ENCODE measurements at regions of chr1 and their contacts with region 1.

Region 1: GRCh38 chr1:24688621-24689195 is 45.6 kb downstream of the SRRM1 start:
- DNase-seq: no peak
- ATAC-seq: peak; percentile 99
- H3K4me3 ChIP-seq: no peak overlapping the region
- H3K27ac ChIP-seq: no peak overlapping the region
- H3K4me1 ChIP-seq: peaks cover 5% of the 10 kb centered on the region
- H3K27me3 ChIP-seq: no peaks in the 10 kb centered on the region
- CTCF ChIP-seq: peak; percentile 91 to 96 (median 96)
- EP300 ChIP-seq: no peak
- POLR2A ChIP-seq: no peak
- RAD21 ChIP-seq: peak; percentile 99

Region 2: GRCh38 chr1:24699628-24700027 is 10.9 kb after region 1 on chr1:
- CTCF ChIA-PET with region 1: interaction called, 4 read pairs
- POLR2A ChIA-PET with region 1: interaction called, 3 read pairs
- RAD21 ChIA-PET with region 1: interaction called, 10 read pairs
- SMC1A ChIA-PET with region 1: interaction called, 26 read pairs
- in situ Hi-C with region 1: no loop called
- intact Hi-C with region 1: no loop called
- DNase-seq: no peak
- ATAC-seq: no peak
- H3K4me3 ChIP-seq: no peak overlapping the region
- H3K27ac ChIP-seq: no peak overlapping the region
- H3K4me1 ChIP-seq: peaks cover 17% of the 10 kb centered on the region
- H3K27me3 ChIP-seq: no peaks in the 10 kb centered on the region
- CTCF ChIP-seq: no peak
- EP300 ChIP-seq: no peak
- POLR2A ChIP-seq: no peak
- RAD21 ChIP-seq: no peak

Region 3: GRCh38 chr1:24744911-24745710 is 56.4 kb after region 1 on chr1 and contains the start of gene CLIC4:
- CTCF ChIA-PET with region 1: interaction called, 122 read pairs
- POLR2A ChIA-PET with region 1: interaction called, 29 read pairs
- RAD21 ChIA-PET with region 1: interaction called, 109 read pairs
- SMC1A ChIA-PET with region 1: interaction called, 93 read pairs
- in situ Hi-C with region 1: no loop called
- intact Hi-C with region 1: loop called (anchors 2 kb)
- DNase-seq: peak; percentile 94
- ATAC-seq: peak; percentile 78
- H3K4me3 ChIP-seq: peak within 1 kb of the TSS; percentile 77
- H3K27ac ChIP-seq: peak within 1 kb of the TSS; percentile 76
- H3K4me1 ChIP-seq: peaks cover 34% of the 10 kb centered on the region
- H3K27me3 ChIP-seq: no peaks in the 10 kb centered on the region
- CTCF ChIP-seq: peak in 2 of 3 experiments; percentile 18 to 72; a peak in 3 of 6 replicates
- EP300 ChIP-seq: peak; percentile 34 to 64; a peak in 2 of 4 replicates
- POLR2A ChIP-seq: peak; percentile 91
- RAD21 ChIP-seq: no peak; the same call in 1 of the 2 replicates
- polyA plus RNA-seq, gene CLIC4: 20.4 to 26.5 TPM

Region 4: GRCh38 chr1:24769656-24770651 is 81.2 kb after region 1 on chr1:
- CTCF ChIA-PET with region 1: interaction called, 20 read pairs
- POLR2A ChIA-PET with region 1: interaction called, 5 read pairs
- RAD21 ChIA-PET with region 1: interaction called, 7 read pairs
- SMC1A ChIA-PET with region 1: interaction called, 40 read pairs
- in situ Hi-C with region 1: no loop called
- intact Hi-C with region 1: no loop called
- DNase-seq: no peak
- ATAC-seq: peak; percentile 78
- H3K4me3 ChIP-seq: no peak overlapping the region
- H3K27ac ChIP-seq: peak overlapping the region; percentile 54
- H3K4me1 ChIP-seq: peaks cover 7% of the 10 kb centered on the region; the same call in 1 of the 2 replicates
- H3K27me3 ChIP-seq: no peaks in the 10 kb centered on the region
- CTCF ChIP-seq: no peak
- EP300 ChIP-seq: peak; percentile 49 to 57; a peak in 3 of 4 replicates
- POLR2A ChIP-seq: no peak
- RAD21 ChIP-seq: no peak

Region 5: DNA sequence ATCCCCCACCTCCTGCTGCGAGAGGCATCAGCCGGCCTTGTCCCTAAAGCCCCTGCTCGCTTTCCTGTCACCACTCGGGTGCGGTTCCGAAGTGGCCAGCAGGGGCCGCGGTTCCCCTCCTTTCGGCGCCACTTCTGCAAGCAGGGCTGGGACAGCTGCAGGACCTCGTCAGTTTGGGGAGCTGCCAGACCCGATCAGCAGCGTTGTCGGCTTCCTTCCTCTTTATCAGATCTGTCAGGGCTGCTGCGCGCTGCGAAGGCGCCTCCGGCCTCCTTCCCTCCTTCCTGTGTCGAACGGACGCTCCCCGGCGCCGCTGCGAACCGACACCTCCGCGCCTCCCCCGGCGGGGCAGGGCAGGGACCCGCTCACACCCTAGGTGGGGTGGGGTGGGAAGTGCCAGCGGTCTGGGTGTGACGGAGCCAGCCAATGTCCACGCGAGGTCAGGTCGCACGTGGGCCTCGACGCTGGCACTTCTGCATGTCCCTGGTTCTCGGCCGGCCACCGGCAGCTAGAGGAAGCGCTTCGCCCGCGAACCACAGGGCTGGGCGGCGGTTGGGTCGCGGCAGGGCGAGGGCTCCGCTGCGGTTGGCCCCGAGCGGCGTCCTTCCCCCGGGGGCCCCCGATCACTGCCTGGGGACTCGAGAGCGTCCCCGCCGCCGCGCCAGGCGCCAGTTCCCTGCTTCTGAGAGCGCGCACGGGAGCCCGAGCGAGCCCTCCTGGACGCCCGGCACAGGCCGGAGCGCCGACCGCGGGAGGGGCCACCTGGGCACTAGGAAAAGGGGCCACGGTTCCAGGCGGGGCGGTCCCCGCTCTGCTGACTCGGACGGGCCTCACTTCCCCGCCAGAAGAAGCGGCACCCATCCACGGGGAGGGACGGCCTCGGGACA is 159.5 kb after region 1 on chr1:
- CTCF ChIA-PET with region 1: interaction called, 18 read pairs
- POLR2A ChIA-PET with region 1: interaction called, 3 read pairs
- RAD21 ChIA-PET with region 1: interaction called, 9 read pairs
- SMC1A ChIA-PET with region 1: interaction called, 4 read pairs
- in situ Hi-C with region 1: no loop called
- intact Hi-C with region 1: no loop called
- DNase-seq: peak; percentile 71
- ATAC-seq: peak; percentile 97
- H3K4me3 ChIP-seq: peak overlapping the region; percentile 56; the same call in 1 of the 2 replicates
- H3K27ac ChIP-seq: no peak overlapping the region
- H3K4me1 ChIP-seq: no peaks in the 10 kb centered on the region
- H3K27me3 ChIP-seq: no peaks in the 10 kb centered on the region
- CTCF ChIP-seq: peak; percentile 93 to 99 (median 98)
- EP300 ChIP-seq: no peak
- POLR2A ChIP-seq: peak; percentile 84
- RAD21 ChIP-seq: peak; percentile 93

Region 6: GRCh38 chr1:25140073-25140797 is 451.5 kb after region 1 on chr1:
- CTCF ChIA-PET with region 1: no interaction called
- POLR2A ChIA-PET with region 1: no interaction called
- RAD21 ChIA-PET with region 1: no interaction called
- SMC1A ChIA-PET with region 1: no interaction called
- in situ Hi-C with region 1: no loop called
- intact Hi-C with region 1: no loop called
- DNase-seq: peak; percentile 69
- ATAC-seq: peak; percentile 97
- H3K4me3 ChIP-seq: no peak overlapping the region
- H3K27ac ChIP-seq: peak overlapping the region; percentile 11
- H3K4me1 ChIP-seq: peaks cover 26% of the 10 kb centered on the region
- H3K27me3 ChIP-seq: no peaks in the 10 kb centered on the region; a peak in 1 of 4 replicates
- CTCF ChIP-seq: no peak
- EP300 ChIP-seq: peak; percentile 51 to 79; a peak in 3 of 4 replicates
- POLR2A ChIP-seq: no peak
- RAD21 ChIP-seq: no peak; the same call in 1 of the 2 replicates

Region 7: GRCh38 chr1:25239681-25240541 is 551.2 kb after region 1 on chr1:
- CTCF ChIA-PET with region 1: no interaction called
- POLR2A ChIA-PET with region 1: no interaction called
- RAD21 ChIA-PET with region 1: no interaction called
- SMC1A ChIA-PET with region 1: no interaction called
- in situ Hi-C with region 1: no loop called
- intact Hi-C with region 1: no loop called
- DNase-seq: peak; percentile 93
- ATAC-seq: peak; percentile 88
- H3K4me3 ChIP-seq: peak overlapping the region; percentile 55
- H3K27ac ChIP-seq: peak overlapping the region; percentile 88
- H3K4me1 ChIP-seq: peaks cover 22% of the 10 kb centered on the region
- H3K27me3 ChIP-seq: no peaks in the 10 kb centered on the region
- CTCF ChIP-seq: peak; percentile 67 to 82 (median 68)
- EP300 ChIP-seq: no peak
- POLR2A ChIP-seq: peak; percentile 83
- RAD21 ChIP-seq: peak; percentile 39; the same call in 1 of the 2 replicates